MCF 10A (cell line): ENCODE measurements at regions of chr7 and their contacts with region 1.

Region 1: DNA sequence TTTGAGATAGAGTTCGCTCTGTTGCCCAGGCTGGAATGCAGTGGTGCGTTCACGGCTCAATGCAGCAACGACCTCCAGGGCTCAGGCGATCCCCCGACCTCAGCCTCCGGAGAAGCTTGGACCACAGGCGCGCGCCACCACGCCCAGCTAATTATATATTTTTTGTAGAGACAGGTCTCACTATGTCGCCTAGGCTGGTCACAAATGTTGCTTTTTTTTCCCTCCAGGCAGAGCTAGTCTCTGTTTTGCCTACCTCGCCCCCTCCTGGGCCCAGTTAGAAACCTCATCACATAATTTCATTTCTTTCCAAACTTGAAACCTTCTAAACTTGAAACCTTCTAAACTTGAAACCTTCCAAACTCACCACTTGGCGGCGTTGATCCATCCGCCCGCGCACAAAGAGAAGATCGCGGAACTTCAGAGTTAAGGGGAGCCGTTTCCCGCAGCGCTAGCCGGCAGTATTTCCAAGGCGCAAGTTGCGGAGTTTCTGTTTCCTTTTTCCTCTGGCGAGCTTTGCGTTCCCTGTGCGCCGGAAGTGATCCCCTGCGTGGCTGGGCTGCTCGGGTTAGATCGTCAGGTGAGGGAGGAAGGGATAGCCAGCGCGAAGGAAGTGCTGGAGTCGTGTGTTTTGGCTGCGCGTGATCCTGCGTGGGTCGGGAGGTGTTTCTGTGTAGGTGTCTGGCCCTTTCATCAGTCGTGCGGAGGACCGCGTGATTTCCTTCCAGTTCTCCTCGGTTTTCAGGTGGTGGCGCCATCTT is at the start of gene SSBP1:
- DNase-seq: peak; percentile 97
- H3K4me3 Mint-ChIP-seq: peak within 1 kb of the TSS; percentile 97
- H3K27ac Mint-ChIP-seq: peak within 1 kb of the TSS; percentile 98
- H3K4me1 Mint-ChIP-seq: peaks cover 16% of the 10 kb centered on the region
- H3K27me3 Mint-ChIP-seq: no peaks in the 10 kb centered on the region
- CTCF ChIP-seq: peak; percentile 53
- total RNA-seq, gene SSBP1: 269 and 340 TPM in 2 replicates

Region 2: DNA sequence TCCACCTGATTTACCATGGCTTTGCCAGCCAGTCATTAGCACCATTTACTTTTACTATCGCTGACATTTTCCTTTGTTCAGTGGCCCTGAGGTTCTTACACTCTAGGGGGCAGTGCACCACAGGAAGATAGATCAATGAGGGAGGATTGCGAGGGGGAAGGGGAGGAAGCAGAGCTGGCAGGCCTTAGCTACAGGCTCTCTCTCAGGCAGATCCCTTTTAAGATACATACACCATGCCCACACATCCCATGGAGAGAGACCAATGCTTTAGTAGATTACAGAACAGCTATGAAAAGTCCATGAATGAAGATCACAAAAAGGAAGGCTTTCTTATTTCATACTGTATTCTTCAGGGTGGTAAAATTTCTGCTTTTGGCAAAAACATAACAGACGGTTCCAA is 83.5 kb before region 1 on chr7:
- CTCF ChIA-PET with region 1: interaction called, 14 read pairs
- POLR2A ChIA-PET with region 1: interaction called, 12 read pairs
- intact Hi-C with region 1: loop called (anchors 1 kb)
- DNase-seq: peak; percentile 75
- H3K4me3 Mint-ChIP-seq: no peak overlapping the region
- H3K27ac Mint-ChIP-seq: no peak overlapping the region
- H3K4me1 Mint-ChIP-seq: peaks cover 5% of the 10 kb centered on the region
- H3K27me3 Mint-ChIP-seq: no peaks in the 10 kb centered on the region
- CTCF ChIP-seq: peak; percentile 47

Region 3: DNA sequence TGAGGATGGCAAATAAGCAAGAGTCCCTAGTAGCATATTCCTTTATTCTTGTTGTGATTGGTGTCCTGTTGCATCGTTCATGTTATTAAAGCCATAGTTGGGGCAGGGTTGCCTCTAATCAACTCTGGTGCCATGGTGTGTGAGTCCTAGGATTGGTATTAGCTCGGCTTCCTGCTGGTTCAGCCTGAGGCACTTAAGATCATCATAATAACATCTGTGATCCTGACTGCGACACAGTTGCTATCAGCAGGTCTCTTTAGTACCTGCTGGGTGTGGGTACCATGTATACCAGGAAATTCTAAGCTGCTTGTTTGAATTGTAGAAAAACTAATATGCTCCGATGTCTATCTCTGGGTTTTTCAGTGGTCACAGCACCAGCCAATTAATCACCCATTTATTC is 28.3 kb before region 1 on chr7:
- CTCF ChIA-PET with region 1: interaction called, 10 read pairs
- POLR2A ChIA-PET with region 1: interaction called, 4 read pairs
- intact Hi-C with region 1: loop called (anchors 5 kb)
- DNase-seq: no peak
- H3K4me3 Mint-ChIP-seq: no peak overlapping the region
- H3K27ac Mint-ChIP-seq: no peak overlapping the region
- H3K4me1 Mint-ChIP-seq: no peaks in the 10 kb centered on the region
- H3K27me3 Mint-ChIP-seq: no peaks in the 10 kb centered on the region
- CTCF ChIP-seq: no peak

Region 4: GRCh38 chr7:141754939-141755338 is 16.9 kb after region 1 on chr7:
- CTCF ChIA-PET with region 1: interaction called, 13 read pairs
- POLR2A ChIA-PET with region 1: interaction called, 3 read pairs
- intact Hi-C with region 1: loop called (anchors 1 kb)
- DNase-seq: peak; percentile 53
- H3K4me3 Mint-ChIP-seq: no peak overlapping the region
- H3K27ac Mint-ChIP-seq: no peak overlapping the region
- H3K4me1 Mint-ChIP-seq: no peaks in the 10 kb centered on the region
- H3K27me3 Mint-ChIP-seq: no peaks in the 10 kb centered on the region
- CTCF ChIP-seq: peak; percentile 39